Activated T-helper 1 cell treated with anti-CD3 and anti-CD28 coated beads, Interleukin-12 subunit alpha, Interleukin-12 subunit beta, Interleukin-2, Interleukin-4 antibody, amounts not matched to agents 30 ng/mL and 10 ng/mL and 1 ng/mL, durations not matched to agents 14 hours and 24 hours and 36 hours (primary cell): ENCODE measurements at regions of chr22 and their contacts with region 1.

Region 1: GRCh38 chr22:44026630-44027511 is 2.8 kb downstream of the PARVB start:
- DNase-seq: peak; percentile 73
- H3K4me3 Mint-ChIP-seq: peak overlapping the region; percentile 93
- H3K27ac Mint-ChIP-seq: peak overlapping the region; percentile 95
- H3K4me1 Mint-ChIP-seq: peaks cover 59% of the 10 kb centered on the region
- H3K27me3 Mint-ChIP-seq: no peaks in the 10 kb centered on the region

Region 2: GRCh38 chr22:43955040-43955882 is 71.6 kb before region 1 on chr22 and contains the start of gene SAMM50:
- intact Hi-C with region 1: loop called (anchors 2 kb)
- DNase-seq: peak; percentile 91
- H3K4me3 Mint-ChIP-seq: peak within 1 kb of the TSS; percentile 97
- H3K27ac Mint-ChIP-seq: peak within 1 kb of the TSS; percentile 93
- H3K4me1 Mint-ChIP-seq: peaks cover 32% of the 10 kb centered on the region
- H3K27me3 Mint-ChIP-seq: no peaks in the 10 kb centered on the region
- total RNA-seq, gene SAMM50: 60.6 and 63.0 TPM in 2 replicates

Region 3: GRCh38 chr22:43993027-43993760 is 33.7 kb before region 1 on chr22:
- intact Hi-C with region 1: loop called (anchors 1 kb)
- DNase-seq: peak; percentile 43
- H3K4me3 Mint-ChIP-seq: no peak overlapping the region
- H3K27ac Mint-ChIP-seq: peak overlapping the region; percentile 61
- H3K4me1 Mint-ChIP-seq: peaks cover 27% of the 10 kb centered on the region
- H3K27me3 Mint-ChIP-seq: no peaks in the 10 kb centered on the region

Region 4: DNA sequence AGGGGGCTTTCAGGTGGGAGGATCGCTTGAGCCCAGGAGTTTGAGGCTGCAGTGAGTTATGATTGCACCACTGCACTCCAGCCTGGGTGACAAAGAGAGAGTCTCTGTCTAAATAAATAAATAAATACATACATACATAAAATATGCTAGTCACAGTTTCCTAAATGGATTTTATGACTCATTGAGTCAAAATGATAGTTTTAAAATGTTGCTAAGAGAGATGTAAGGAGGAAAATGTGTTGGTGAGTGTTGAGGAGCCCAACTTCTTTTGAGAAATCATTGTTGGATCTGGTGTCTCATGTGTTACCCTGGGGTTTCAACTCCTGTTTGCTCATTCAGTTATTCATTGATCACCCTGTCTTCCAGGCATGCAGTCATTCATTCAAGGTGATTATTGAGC is 18.3 kb after region 1 on chr22:
- intact Hi-C with region 1: loop called (anchors 2 kb)
- DNase-seq: no peak
- H3K4me3 Mint-ChIP-seq: no peak overlapping the region
- H3K27ac Mint-ChIP-seq: peak overlapping the region; percentile 81
- H3K4me1 Mint-ChIP-seq: peaks cover 47% of the 10 kb centered on the region
- H3K27me3 Mint-ChIP-seq: no peaks in the 10 kb centered on the region

Region 5: DNA sequence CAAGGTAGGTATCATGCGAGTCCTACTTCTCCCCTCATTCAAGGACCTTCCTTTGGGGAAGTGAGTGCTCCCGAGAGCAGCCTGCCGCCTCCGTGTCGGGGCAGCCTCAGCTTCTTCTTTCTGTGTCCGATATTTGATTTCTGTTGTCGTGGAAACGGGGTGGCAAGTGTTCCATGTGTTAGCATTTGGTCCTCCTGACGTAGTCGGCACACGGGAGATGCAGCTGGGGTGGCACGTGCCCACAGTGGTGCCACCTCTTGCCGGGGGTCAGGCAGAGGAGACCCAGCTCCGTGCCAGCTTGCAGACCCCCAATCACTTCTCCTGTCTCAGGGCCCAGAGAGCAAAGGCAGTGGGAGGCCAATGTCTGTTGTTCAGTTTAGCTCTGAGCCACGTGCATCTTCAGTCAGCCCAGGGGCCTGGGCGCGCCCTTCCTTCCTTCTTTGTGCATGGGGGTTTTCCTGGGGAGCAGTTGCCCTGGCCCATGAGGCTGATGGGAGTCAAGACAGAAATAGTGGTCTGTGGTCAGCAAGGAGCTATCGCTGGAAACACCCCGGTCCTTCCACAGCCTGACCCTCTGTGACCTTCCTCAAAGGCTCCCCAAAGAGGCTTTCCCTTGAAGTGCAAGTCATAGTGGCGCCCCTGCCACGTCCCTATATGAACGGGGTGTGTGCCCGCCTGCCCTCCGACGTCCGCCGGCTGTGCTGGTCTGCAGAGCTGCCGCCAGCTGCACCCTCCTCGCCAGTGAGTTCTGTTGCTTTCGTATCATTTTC is 41.7 kb after region 1 on chr22:
- intact Hi-C with region 1: no loop called
- DNase-seq: no peak
- H3K4me3 Mint-ChIP-seq: peak overlapping the region; percentile 21
- H3K27ac Mint-ChIP-seq: peak overlapping the region; percentile 81
- H3K4me1 Mint-ChIP-seq: peaks cover 10% of the 10 kb centered on the region
- H3K27me3 Mint-ChIP-seq: no peaks in the 10 kb centered on the region

Region 6: DNA sequence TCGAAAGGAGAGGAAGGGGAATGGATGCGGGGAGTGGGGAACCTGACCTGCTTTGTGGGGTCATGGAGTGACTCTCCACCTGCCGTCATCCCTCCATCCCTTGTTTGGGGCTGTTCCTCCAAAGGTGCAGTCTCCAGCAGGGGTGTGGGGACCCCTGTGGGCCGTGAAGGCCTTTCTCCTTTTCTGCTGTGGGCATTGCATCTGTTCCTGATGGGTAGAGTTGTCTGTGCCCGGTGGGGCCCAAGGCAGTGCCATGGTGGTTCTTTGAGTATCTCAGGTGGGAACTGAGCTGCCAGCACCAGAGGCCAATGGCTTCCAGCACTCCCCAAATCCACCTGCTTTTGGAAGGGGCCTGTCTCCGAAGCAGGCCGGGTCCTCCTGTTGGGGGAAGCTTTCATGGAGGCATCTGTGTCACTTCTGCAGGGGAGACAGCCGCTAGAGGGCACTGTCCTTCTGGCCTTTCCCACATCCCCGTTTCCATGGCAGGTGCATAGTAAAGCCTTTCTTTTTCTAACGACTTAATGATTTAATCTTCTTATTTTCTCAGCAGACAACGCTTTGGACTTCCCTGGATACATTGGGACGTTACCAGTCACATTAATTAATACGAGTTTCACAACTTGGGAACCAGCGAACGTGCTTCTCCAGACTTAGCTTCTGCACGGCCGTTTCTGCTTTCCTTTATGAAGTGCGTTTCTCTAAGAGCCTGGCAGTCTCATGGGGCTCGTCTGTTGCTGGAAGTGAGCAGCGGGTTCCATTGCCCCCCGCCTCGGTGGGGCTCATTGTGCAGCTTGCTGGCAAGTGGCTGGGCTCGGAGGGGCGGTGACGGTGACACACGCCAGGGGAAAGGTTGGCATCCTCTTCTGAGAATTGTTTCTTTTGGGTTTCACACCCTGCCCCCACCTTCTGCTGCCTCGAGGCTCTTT is 54.3 kb after region 1 on chr22:
- intact Hi-C with region 1: loop called (anchors 2 kb)
- DNase-seq: peak; percentile 49
- H3K4me3 Mint-ChIP-seq: no peak overlapping the region
- H3K27ac Mint-ChIP-seq: no peak overlapping the region
- H3K4me1 Mint-ChIP-seq: no peaks in the 10 kb centered on the region
- H3K27me3 Mint-ChIP-seq: no peaks in the 10 kb centered on the region

Region 7: DNA sequence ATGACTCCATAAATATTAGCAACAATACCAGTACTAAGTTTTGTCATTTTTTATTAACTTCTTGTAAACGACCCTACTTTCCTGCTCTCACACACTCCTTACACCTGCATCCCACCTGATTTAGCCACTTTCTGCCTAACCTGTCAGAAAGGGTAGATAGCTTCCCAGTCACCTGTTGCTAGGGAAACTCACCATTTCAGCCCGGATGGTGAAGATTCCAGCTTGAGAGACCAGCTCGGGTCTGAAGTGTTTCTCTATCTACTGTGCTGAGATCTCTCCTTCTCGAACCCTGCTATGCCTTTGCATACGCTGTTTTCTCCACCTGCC is 153.8 kb after region 1 on chr22 and contains the start of gene PARVG:
- intact Hi-C with region 1: loop called (anchors 10 kb)
- DNase-seq: peak; percentile 33
- H3K4me3 Mint-ChIP-seq: peak within 1 kb of the TSS; percentile 81
- H3K27ac Mint-ChIP-seq: peak within 1 kb of the TSS; percentile 97
- H3K4me1 Mint-ChIP-seq: peaks cover 19% of the 10 kb centered on the region
- H3K27me3 Mint-ChIP-seq: peaks cover 9% of the 10 kb centered on the region
- total RNA-seq, gene PARVG: 50.6 and 52.8 TPM in 2 replicates